Vagina (tissue), 2 donors: ENCODE measurements at regions of chr12 and their contacts with region 1.

Region 1: GRCh38 chr12:51666696-51667095 is 75.7 kb downstream of the SCN8A start:
- DNase-seq: no peak
- H3K4me3 ChIP-seq: no peak overlapping the region
- H3K27ac ChIP-seq: no peak overlapping the region
- H3K4me1 ChIP-seq: no peaks in the 10 kb centered on the region
- H3K27me3 ChIP-seq: no peaks in the 10 kb centered on the region
- CTCF ChIP-seq: no peak
- POLR2A ChIP-seq: no peak

Region 2: DNA sequence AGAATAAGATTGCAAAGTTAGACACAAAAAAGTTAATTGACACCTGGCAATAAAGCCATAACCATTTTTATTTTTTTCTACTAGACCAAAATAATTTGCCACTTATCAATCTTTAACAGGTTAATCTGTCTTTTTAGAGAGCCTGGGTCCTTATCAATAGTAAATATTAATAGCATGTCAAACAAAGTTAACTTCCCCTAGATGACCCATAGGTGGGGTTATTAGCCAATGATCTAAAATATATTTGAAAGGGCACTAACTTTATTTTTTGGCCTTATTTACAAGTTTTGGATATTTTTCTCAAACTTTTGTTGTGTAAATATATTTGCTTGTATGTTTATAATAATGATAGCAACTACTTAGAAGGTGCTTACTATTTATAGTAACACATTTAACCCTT is 225.1 kb after region 1 on chr12:
- intact Hi-C with region 1: no loop called
- DNase-seq: no peak
- H3K4me3 ChIP-seq: no peak overlapping the region
- H3K27ac ChIP-seq: no peak overlapping the region
- H3K4me1 ChIP-seq: peaks cover 11% of the 10 kb centered on the region
- H3K27me3 ChIP-seq: no peaks in the 10 kb centered on the region
- CTCF ChIP-seq: no peak
- POLR2A ChIP-seq: no peak

Region 3: GRCh38 chr12:52052464-52053186 is 385.9 kb after region 1 on chr12:
- intact Hi-C with region 1: no loop called
- DNase-seq: peak in 1 of 2 donors; percentile 92
- H3K4me3 ChIP-seq: peak overlapping the region; percentile 53 to 77
- H3K27ac ChIP-seq: peak overlapping the region; percentile 99
- H3K4me1 ChIP-seq: peaks cover 24% of the 10 kb centered on the region
- H3K27me3 ChIP-seq: no peaks in the 10 kb centered on the region
- CTCF ChIP-seq: no peak
- POLR2A ChIP-seq: no peak

Region 4: GRCh38 chr12:52543985-52544883 is 877.5 kb after region 1 on chr12:
- intact Hi-C with region 1: loop called (anchors 5 kb)
- DNase-seq: no peak
- H3K4me3 ChIP-seq: no peak overlapping the region
- H3K27ac ChIP-seq: no peak overlapping the region
- H3K4me1 ChIP-seq: peaks cover 34% of the 10 kb centered on the region
- H3K27me3 ChIP-seq: no peaks in the 10 kb centered on the region
- CTCF ChIP-seq: no peak
- POLR2A ChIP-seq: no peak